GM18951 (cell line): ENCODE measurements at regions of chr6 and their contacts with region 1.

Region 1: DNA sequence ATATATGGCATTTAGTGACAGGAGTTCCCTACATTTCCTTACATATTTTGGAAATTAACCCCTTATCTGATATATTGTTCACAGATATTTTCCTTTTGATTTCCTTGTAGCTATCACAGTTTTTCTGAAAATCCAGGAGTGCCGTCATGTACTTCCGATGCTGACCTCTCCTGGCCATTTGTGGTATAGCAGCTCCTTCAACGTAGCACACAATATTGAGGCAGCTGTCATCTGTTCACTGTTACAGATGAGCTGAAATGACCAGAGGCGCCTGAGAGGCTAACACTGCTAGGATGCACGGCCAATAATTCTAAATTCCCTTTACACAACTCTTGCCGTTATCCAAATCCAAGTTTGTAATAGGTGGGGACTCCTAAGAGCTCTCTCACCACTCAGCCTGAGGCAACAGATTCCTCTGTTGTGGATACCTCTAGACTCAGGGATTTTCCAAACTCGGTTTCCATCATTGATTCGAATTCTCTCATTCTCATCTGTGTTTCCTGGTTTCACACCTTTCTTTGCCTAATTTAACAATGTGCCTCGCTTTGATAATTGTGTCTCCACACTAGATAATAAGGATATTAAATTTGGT is 53.0 kb downstream of the MMUT start:
- POLR2A ChIP-seq: no peak

Region 2: DNA sequence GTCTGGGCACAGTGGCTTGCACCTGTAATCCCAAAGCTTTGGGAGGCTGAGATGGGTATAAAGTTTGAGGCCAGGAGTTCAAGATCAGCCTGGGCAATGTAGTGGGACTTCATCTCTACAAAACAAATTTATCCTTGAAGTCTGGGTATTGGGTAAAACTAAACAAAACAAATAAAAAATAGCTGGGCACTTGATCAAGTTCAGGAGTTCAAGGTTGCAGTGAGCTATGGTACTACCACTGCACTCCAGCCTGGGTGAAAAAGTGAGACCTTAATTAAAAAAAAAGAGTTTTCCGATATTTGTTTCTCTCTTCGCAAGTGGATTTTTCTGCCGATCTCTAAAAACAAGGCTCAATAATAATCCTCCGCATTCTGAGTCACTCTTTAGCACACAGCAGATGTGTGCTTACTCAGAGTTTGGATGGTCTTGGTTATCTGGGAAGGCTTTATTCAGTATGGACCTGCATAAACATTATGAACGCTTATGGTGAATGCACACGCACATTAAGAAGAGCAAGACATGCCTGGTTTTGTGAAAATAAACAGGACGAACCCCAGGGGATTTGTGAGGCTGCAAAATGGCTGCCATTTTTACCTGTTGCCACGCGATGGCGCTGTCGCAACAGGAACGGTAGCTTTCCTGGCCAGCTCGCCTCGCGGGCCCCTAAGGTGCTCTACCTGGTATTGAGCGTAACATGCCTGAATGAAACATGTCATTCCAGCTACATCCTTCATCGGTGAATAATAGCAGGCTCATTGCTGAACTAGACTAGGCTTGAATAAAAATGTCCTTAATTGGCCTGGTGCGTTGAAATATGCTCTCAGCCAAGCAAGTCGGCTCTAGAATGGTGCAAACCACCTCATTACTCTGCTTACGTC is 1622.2 kb before region 1 on chr6:
- in situ Hi-C with region 1: loop called (anchors 25 kb)
- POLR2A ChIP-seq: no peak